ENCODE measurements at regions of chr3 and their contacts with region 1.

Region 1: GRCh38 chr3:182105875-182106274 is 394.1 kb downstream of the SOX2 start:
- DNase-seq: no peak
- H3K4me3 ChIP-seq: no peak overlapping the region
- H3K27ac ChIP-seq: no peak overlapping the region
- H3K4me1 ChIP-seq: no peaks in the 10 kb centered on the region
- H3K27me3 ChIP-seq: no peaks in the 10 kb centered on the region
- CTCF ChIP-seq: no peak
- EP300 ChIP-seq: no peak
- POLR2A ChIP-seq: no peak

Region 2: DNA sequence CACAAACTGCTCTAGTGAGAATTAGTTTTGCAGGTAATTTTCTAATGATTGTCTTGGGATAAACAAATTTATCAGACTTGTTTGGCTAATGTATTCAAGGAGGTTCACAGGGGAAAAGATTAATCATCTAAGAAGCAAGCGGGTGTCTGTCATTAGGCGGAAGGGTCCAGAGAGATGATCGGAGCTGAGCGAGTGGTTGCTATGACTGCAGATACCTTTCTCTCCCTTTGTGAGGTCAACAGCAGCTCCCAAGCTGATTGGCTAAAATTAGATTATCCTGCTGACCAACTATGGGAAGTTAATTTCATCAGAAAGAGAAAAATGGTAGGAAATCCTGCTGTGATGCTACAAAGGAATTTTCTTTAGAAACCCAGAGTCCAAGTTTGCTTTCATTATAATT is 118.1 kb before region 1 on chr3:
- in situ Hi-C with region 1: no loop called
- intact Hi-C with region 1: no loop called
- DNase-seq: no peak
- H3K4me3 ChIP-seq: no peak overlapping the region
- H3K27ac ChIP-seq: no peak overlapping the region
- H3K4me1 ChIP-seq: no peaks in the 10 kb centered on the region
- H3K27me3 ChIP-seq: no peaks in the 10 kb centered on the region
- CTCF ChIP-seq: no peak
- EP300 ChIP-seq: no peak
- POLR2A ChIP-seq: no peak

Region 3: GRCh38 chr3:183291497-183292040 is 1185.7 kb after region 1 on chr3:
- in situ Hi-C with region 1: no loop called
- intact Hi-C with region 1: loop called (anchors 5 kb)
- DNase-seq: no peak
- H3K4me3 ChIP-seq: no peak overlapping the region
- H3K27ac ChIP-seq: peak overlapping the region in 1 of 4 donors; percentile 18
- H3K4me1 ChIP-seq: peaks cover 0 to 7% (median 5%) of the 10 kb centered on the region in 4 donors
- H3K27me3 ChIP-seq: no peaks in the 10 kb centered on the region
- CTCF ChIP-seq: no peak
- EP300 ChIP-seq: no peak
- POLR2A ChIP-seq: no peak

Measured in transverse colon (tissue), 4 donors.